Activated B cell treated with CpG ODN at 0.5 μM for 24 hours (primary cell): ENCODE measurements at regions of chr3 and their contacts with region 1.

Region 1: GRCh38 chr3:152496716-152497115 is 228.0 kb downstream of the MBNL1 start:
- DNase-seq: no peak
- ATAC-seq: peak; percentile 53
- H3K4me3 Mint-ChIP-seq: peak overlapping the region; percentile 77
- H3K27ac Mint-ChIP-seq: peak overlapping the region; percentile 80
- H3K4me1 Mint-ChIP-seq: peaks cover 60% of the 10 kb centered on the region
- H3K27me3 Mint-ChIP-seq: no peaks in the 10 kb centered on the region
- CTCF ChIP-seq: no peak

Region 2: GRCh38 chr3:152480282-152480953 is 16.3 kb before region 1 on chr3:
- CTCF ChIA-PET with region 1: interaction called, 6 read pairs
- POLR2A ChIA-PET with region 1: interaction called, 7 read pairs
- intact Hi-C with region 1: loop called (anchors 1 kb)
- DNase-seq: no peak
- ATAC-seq: peak; percentile 49
- H3K4me3 Mint-ChIP-seq: peak overlapping the region; percentile 55
- H3K27ac Mint-ChIP-seq: peak overlapping the region; percentile 82
- H3K4me1 Mint-ChIP-seq: peaks cover 54% of the 10 kb centered on the region
- H3K27me3 Mint-ChIP-seq: no peaks in the 10 kb centered on the region
- CTCF ChIP-seq: no peak

Region 3: DNA sequence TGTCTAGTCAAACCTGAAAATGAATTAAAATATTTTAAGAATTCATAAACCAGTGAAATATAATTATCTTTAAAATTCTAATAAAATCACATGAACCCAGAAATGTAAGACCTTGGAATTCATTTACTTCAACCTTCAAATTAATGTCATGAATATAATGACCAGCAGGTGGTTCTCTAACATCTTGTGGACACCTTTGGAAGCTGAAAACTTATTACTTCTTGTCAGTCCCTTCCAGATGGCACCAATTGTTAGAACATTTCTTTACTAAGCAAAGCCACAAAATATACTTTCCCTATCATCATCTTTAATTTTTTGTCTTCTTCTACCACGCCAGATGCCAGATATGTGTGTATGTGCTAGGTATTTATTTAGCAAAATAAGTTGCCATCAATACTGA is 12.0 kb after region 1 on chr3:
- CTCF ChIA-PET with region 1: interaction called, 8 read pairs
- POLR2A ChIA-PET with region 1: interaction called, 20 read pairs
- intact Hi-C with region 1: loop called (anchors 1 kb)
- DNase-seq: no peak
- ATAC-seq: no peak
- H3K4me3 Mint-ChIP-seq: peak overlapping the region; percentile 6
- H3K27ac Mint-ChIP-seq: peak overlapping the region; percentile 82
- H3K4me1 Mint-ChIP-seq: peaks cover 88% of the 10 kb centered on the region
- H3K27me3 Mint-ChIP-seq: no peaks in the 10 kb centered on the region
- CTCF ChIP-seq: no peak